Natural killer cell (primary cell): ENCODE measurements at regions of chr14 and their contacts with region 1.

Region 1: GRCh38 chr14:89915114-89915878 is 39.2 kb downstream of the EFCAB11 start:
- DNase-seq: peak; percentile 40 to 79
- ATAC-seq: peak; percentile 75 to 78 (median 77)
- H3K4me3 ChIP-seq: no peak overlapping the region
- H3K4me3 Mint-ChIP-seq: no peak overlapping the region
- H3K27ac ChIP-seq: no peak overlapping the region
- H3K27ac Mint-ChIP-seq: no peak overlapping the region
- H3K4me1 ChIP-seq: no peaks in the 10 kb centered on the region
- H3K4me1 Mint-ChIP-seq: no peaks in the 10 kb centered on the region
- H3K27me3 ChIP-seq: no peaks in the 10 kb centered on the region
- H3K27me3 Mint-ChIP-seq: peaks cover 9 to 16% of the 10 kb centered on the region in 2 donors
- CTCF ChIP-seq: peak; percentile 98

Region 2: GRCh38 chr14:88667555-88668273 is 1247.6 kb before region 1 on chr14:
- intact Hi-C with region 1: loop called (anchors 5 kb)
- DNase-seq: peak in 1 of 2 donors; percentile 80
- ATAC-seq: peak; percentile 59 to 74 (median 69)
- H3K4me3 ChIP-seq: no peak overlapping the region
- H3K4me3 Mint-ChIP-seq: no peak overlapping the region
- H3K27ac ChIP-seq: no peak overlapping the region
- H3K27ac Mint-ChIP-seq: no peak overlapping the region
- H3K4me1 ChIP-seq: peaks cover 3% of the 10 kb centered on the region
- H3K4me1 Mint-ChIP-seq: no peaks in the 10 kb centered on the region
- H3K27me3 ChIP-seq: no peaks in the 10 kb centered on the region
- H3K27me3 Mint-ChIP-seq: peaks cover 0 to 7% of the 10 kb centered on the region in 2 donors
- CTCF ChIP-seq: peak; percentile 77

Region 3: GRCh38 chr14:89027097-89027740 is 888.1 kb before region 1 on chr14:
- intact Hi-C with region 1: loop called (anchors 1 kb)
- DNase-seq: peak; percentile 60 to 80
- ATAC-seq: peak; percentile 86 to 93 (median 91)
- H3K4me3 ChIP-seq: peak overlapping the region; percentile 38
- H3K4me3 Mint-ChIP-seq: peak overlapping the region; percentile 56
- H3K27ac ChIP-seq: no peak overlapping the region
- H3K27ac Mint-ChIP-seq: no peak overlapping the region
- H3K4me1 ChIP-seq: peaks cover 14% of the 10 kb centered on the region
- H3K4me1 Mint-ChIP-seq: no peaks in the 10 kb centered on the region
- H3K27me3 ChIP-seq: peaks cover 25% of the 10 kb centered on the region
- H3K27me3 Mint-ChIP-seq: peaks cover 54 to 62% of the 10 kb centered on the region in 2 donors
- CTCF ChIP-seq: peak; percentile 74

Region 4: GRCh38 chr14:89178802-89179535 is 736.3 kb before region 1 on chr14:
- intact Hi-C with region 1: loop called (anchors 1 kb)
- DNase-seq: no peak
- ATAC-seq: no peak
- H3K4me3 ChIP-seq: no peak overlapping the region
- H3K4me3 Mint-ChIP-seq: no peak overlapping the region
- H3K27ac ChIP-seq: no peak overlapping the region
- H3K27ac Mint-ChIP-seq: peak overlapping the region; percentile 34 to 69
- H3K4me1 ChIP-seq: peaks cover 6% of the 10 kb centered on the region
- H3K4me1 Mint-ChIP-seq: peaks cover 41 to 47% of the 10 kb centered on the region in 2 donors
- H3K27me3 ChIP-seq: no peaks in the 10 kb centered on the region
- H3K27me3 Mint-ChIP-seq: no peaks in the 10 kb centered on the region
- CTCF ChIP-seq: no peak